ENCODE measurements at regions of chr3 and their contacts with region 1.

Region 1: GRCh38 chr3:182618085-182618732 is 175.1 kb upstream of the ATP11B start:
- DNase-seq: peak; percentile 57
- H3K4me3 Mint-ChIP-seq: no peak overlapping the region
- H3K27ac Mint-ChIP-seq: no peak overlapping the region
- H3K4me1 Mint-ChIP-seq: peaks cover 17% of the 10 kb centered on the region
- H3K27me3 Mint-ChIP-seq: no peaks in the 10 kb centered on the region
- CTCF ChIP-seq: peak; percentile 87

Region 2: DNA sequence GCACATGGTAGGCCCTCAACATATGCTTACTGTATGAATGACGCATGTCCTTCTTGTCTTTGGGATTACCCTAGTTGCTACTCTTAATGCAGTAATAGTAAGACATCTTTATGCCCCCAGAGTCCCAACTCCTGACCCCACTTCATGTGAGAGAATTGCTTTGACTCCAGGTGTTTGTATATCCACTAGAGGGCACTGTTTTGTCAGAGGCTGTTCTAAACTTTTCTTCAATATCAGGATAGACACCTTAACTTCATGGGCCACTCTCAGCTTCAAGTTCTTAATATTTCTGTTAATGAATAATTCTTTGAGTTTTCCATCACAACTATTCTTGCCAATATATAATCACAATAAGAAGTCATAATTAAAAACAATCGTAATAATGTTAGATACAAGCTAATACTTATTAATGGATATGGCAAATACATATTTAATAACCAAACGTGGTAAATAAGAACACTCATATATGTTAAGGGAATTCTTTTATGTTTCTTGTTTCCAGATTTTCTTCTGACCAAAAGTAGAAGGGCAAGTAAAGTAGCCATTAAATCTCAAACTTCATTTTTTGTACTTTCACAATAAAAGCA is 1291.5 kb before region 1 on chr3:
- CTCF ChIA-PET with region 1: interaction called, 3 read pairs
- intact Hi-C with region 1: loop called (anchors 1 kb)
- DNase-seq: peak; percentile 30
- H3K4me3 Mint-ChIP-seq: no peak overlapping the region
- H3K27ac Mint-ChIP-seq: no peak overlapping the region
- H3K4me1 Mint-ChIP-seq: peaks cover 18% of the 10 kb centered on the region
- H3K27me3 Mint-ChIP-seq: no peaks in the 10 kb centered on the region
- CTCF ChIP-seq: peak; percentile 82

Region 3: GRCh38 chr3:181948286-181948685 is 669.9 kb before region 1 on chr3:
- CTCF ChIA-PET with region 1: no interaction called
- intact Hi-C with region 1: loop called (anchors 2 kb)
- DNase-seq: peak; percentile 53
- H3K4me3 Mint-ChIP-seq: no peak overlapping the region
- H3K27ac Mint-ChIP-seq: no peak overlapping the region
- H3K4me1 Mint-ChIP-seq: no peaks in the 10 kb centered on the region
- H3K27me3 Mint-ChIP-seq: no peaks in the 10 kb centered on the region
- CTCF ChIP-seq: peak; percentile 49

Region 4: DNA sequence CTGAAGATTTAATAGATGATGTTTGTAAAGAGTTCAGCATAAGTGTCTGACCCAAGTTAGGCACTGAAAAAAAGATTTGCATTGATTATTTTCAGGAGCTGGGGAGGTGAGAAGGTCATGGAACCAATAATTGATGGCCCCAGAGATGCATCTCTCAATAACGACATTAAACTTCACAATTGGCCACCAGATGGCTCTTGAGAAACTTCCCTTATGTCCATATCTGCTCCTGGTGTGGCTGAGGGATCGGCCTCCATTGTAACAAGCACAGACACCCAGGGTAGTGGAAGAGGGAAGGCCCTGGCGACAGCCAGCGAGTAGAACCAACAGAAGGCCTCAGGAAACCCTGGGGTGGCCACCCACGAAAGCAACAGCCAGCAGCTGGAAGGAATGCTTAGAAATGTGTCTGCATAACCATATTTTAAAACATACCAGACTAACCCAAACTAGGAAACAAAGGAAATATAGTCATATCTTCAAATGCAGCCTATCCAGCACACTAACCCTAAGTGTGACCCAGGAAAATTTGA is 369.8 kb before region 1 on chr3:
- CTCF ChIA-PET with region 1: no interaction called
- intact Hi-C with region 1: loop called (anchors 2 kb)
- DNase-seq: peak; percentile 14
- H3K4me3 Mint-ChIP-seq: no peak overlapping the region
- H3K27ac Mint-ChIP-seq: no peak overlapping the region
- H3K4me1 Mint-ChIP-seq: no peaks in the 10 kb centered on the region
- H3K27me3 Mint-ChIP-seq: no peaks in the 10 kb centered on the region
- CTCF ChIP-seq: peak; percentile 30

Region 5: DNA sequence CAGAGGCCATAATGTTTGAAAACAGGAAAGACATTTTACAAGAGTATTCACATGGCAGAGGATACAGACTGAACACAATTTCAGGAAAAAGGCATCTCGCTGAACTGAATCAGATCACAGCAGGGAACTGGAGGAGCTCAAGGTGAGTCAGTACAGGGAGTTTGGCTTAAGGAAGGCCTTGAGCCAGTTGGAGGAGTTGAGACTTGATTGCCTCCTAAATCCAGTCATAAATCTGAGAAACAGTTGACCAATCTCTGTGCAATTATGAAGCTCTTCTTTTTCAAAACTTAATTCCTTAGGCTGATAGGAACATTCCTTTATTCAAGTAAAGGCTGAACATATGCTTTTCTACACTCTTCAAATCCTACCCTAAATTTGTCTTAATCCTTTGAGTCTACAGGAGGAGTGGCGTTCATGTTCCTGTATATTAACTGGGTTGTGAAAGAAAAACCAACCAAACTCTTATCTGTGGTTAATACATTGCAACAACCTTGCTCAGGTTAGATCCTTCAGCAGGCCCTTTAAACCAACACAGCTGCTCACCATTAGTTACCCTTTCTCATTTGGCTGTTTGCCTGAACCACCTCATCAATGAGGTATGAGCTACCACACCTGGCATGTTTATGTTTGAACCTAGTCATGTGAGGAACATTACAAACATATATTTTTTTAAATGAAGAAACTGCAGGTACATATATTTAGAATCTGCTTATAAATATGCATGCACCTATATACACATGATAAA is 229.0 kb before region 1 on chr3:
- CTCF ChIA-PET with region 1: interaction called, 6 read pairs
- intact Hi-C with region 1: loop called (anchors 1 kb)
- DNase-seq: peak; percentile 83
- H3K4me3 Mint-ChIP-seq: no peak overlapping the region
- H3K27ac Mint-ChIP-seq: peak overlapping the region; percentile 72
- H3K4me1 Mint-ChIP-seq: peaks cover 13% of the 10 kb centered on the region
- H3K27me3 Mint-ChIP-seq: no peaks in the 10 kb centered on the region
- CTCF ChIP-seq: no peak

Region 6: GRCh38 chr3:182484682-182485081 is 133.5 kb before region 1 on chr3:
- CTCF ChIA-PET with region 1: no interaction called
- intact Hi-C with region 1: no loop called
- DNase-seq: no peak
- H3K4me3 Mint-ChIP-seq: no peak overlapping the region
- H3K27ac Mint-ChIP-seq: no peak overlapping the region
- H3K4me1 Mint-ChIP-seq: peaks cover 18% of the 10 kb centered on the region
- H3K27me3 Mint-ChIP-seq: no peaks in the 10 kb centered on the region
- CTCF ChIP-seq: no peak

Region 7: GRCh38 chr3:182544542-182544941 is 73.7 kb before region 1 on chr3:
- CTCF ChIA-PET with region 1: no interaction called
- intact Hi-C with region 1: no loop called
- DNase-seq: no peak
- H3K4me3 Mint-ChIP-seq: no peak overlapping the region
- H3K27ac Mint-ChIP-seq: no peak overlapping the region
- H3K4me1 Mint-ChIP-seq: no peaks in the 10 kb centered on the region
- H3K27me3 Mint-ChIP-seq: no peaks in the 10 kb centered on the region
- CTCF ChIP-seq: no peak